ENCODE measurements at regions of chr5 and their contacts with region 1.

Region 1: GRCh38 chr5:35003018-35003957 is 44.5 kb downstream of the AGXT2 start:
- DNase-seq: peak in 6 of 10 donors; percentile 22 to 74 (median 42)
- H3K4me3 ChIP-seq: no peak overlapping the region
- H3K27ac ChIP-seq: no peak overlapping the region
- H3K27me3 ChIP-seq: peaks cover 0 to 13% (median 0%) of the 10 kb centered on the region in 45 donors
- CTCF ChIP-seq: peak; percentile 65 to 93 (median 84)

Region 2: DNA sequence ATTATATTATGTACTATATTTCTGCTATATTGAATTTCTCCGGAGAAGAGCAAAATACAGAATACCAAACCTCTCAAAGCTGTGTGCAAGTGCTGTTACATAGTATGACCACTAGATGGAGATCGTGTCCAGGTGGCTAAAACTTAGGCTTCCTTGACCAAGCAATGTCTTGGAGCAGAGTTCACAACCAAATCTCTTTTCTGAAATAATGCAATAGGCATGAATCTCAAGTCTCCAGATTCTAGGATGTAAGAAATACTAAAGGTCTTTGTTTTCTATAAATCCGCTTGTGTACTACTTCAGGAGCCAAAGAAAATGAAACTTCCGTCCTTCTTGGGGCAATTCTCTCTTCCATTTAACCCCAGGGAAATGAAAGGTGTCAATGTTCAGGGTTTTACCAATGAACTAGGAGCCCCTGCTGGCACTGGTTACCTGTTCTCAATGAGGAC is 528.7 kb before region 1 on chr5:
- intact Hi-C with region 1: loop called in 1 of 2 experiments (anchors 5 kb)
- DNase-seq: no peak
- H3K4me3 ChIP-seq: no peak overlapping the region
- H3K27ac ChIP-seq: peak overlapping the region in 3 of 59 donors; percentile 18 to 23 (median 22)
- H3K27me3 ChIP-seq: peaks cover 0 to 8% (median 0%) of the 10 kb centered on the region in 45 donors
- CTCF ChIP-seq: peak; percentile 75 to 99 (median 97)